AG04450 (cell line): ENCODE measurements at regions of chr11 and their contacts with region 1.

Region 1: GRCh38 chr11:10857709-10858438 is at the start of gene ZBED5:
- DNase-seq: peak; percentile 91
- H3K4me3 ChIP-seq: peak within 1 kb of the TSS; percentile 92
- H3K27ac ChIP-seq: peak within 1 kb of the TSS; percentile 97
- H3K27me3 ChIP-seq: no peaks in the 10 kb centered on the region
- CTCF ChIP-seq: peak; percentile 25; the same call in 1 of the 2 replicates
- polyA plus RNA-seq, gene ZBED5: 77.5 and 87.7 TPM in 2 replicates

Region 2: GRCh38 chr11:9527481-9528140 is 1330.3 kb before region 1 on chr11:
- CTCF ChIA-PET with region 1: no interaction called
- POLR2A ChIA-PET with region 1: no interaction called
- DNase-seq: peak; percentile 13
- H3K4me3 ChIP-seq: no peak overlapping the region
- H3K27ac ChIP-seq: peak overlapping the region; percentile 66
- H3K27me3 ChIP-seq: no peaks in the 10 kb centered on the region
- CTCF ChIP-seq: no peak

Region 3: DNA sequence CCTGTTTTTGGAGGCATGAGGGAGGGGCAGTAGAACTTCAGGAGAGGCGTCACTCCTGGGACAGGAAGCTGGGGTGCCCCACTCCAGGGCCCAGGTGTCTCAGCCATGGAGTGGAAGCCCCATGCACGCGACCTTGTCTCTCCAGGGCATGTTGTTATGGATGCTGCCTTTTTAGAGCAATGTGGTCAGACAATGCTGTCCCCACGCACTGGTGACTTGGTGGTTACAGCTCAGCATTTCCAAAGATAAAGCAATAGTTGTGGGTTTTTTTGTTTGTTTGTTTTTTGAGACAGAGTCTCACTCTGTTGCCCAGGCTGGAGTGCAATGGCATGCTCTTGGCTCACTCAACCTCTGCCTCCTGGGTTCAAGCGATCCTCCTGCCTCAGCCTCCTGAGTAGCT is 71.4 kb before region 1 on chr11:
- CTCF ChIA-PET with region 1: no interaction called
- POLR2A ChIA-PET with region 1: no interaction called
- DNase-seq: no peak
- H3K4me3 ChIP-seq: no peak overlapping the region
- H3K27ac ChIP-seq: no peak overlapping the region
- H3K27me3 ChIP-seq: no peaks in the 10 kb centered on the region
- CTCF ChIP-seq: no peak

Region 4: GRCh38 chr11:10818594-10818993 is 39.3 kb before region 1 on chr11:
- CTCF ChIA-PET with region 1: interaction called, 9 read pairs
- POLR2A ChIA-PET with region 1: interaction called, 10 read pairs
- DNase-seq: peak; percentile 70
- H3K4me3 ChIP-seq: no peak overlapping the region
- H3K27ac ChIP-seq: peak overlapping the region; percentile 71
- H3K27me3 ChIP-seq: no peaks in the 10 kb centered on the region
- CTCF ChIP-seq: no peak

Region 5: GRCh38 chr11:10893714-10894151 is 35.9 kb after region 1 on chr11:
- CTCF ChIA-PET with region 1: interaction called, 7 read pairs
- POLR2A ChIA-PET with region 1: interaction called, 44 read pairs
- DNase-seq: peak; percentile 62
- H3K4me3 ChIP-seq: no peak overlapping the region
- H3K27ac ChIP-seq: peak overlapping the region; percentile 72
- H3K27me3 ChIP-seq: no peaks in the 10 kb centered on the region
- CTCF ChIP-seq: peak; percentile 62

Region 6: DNA sequence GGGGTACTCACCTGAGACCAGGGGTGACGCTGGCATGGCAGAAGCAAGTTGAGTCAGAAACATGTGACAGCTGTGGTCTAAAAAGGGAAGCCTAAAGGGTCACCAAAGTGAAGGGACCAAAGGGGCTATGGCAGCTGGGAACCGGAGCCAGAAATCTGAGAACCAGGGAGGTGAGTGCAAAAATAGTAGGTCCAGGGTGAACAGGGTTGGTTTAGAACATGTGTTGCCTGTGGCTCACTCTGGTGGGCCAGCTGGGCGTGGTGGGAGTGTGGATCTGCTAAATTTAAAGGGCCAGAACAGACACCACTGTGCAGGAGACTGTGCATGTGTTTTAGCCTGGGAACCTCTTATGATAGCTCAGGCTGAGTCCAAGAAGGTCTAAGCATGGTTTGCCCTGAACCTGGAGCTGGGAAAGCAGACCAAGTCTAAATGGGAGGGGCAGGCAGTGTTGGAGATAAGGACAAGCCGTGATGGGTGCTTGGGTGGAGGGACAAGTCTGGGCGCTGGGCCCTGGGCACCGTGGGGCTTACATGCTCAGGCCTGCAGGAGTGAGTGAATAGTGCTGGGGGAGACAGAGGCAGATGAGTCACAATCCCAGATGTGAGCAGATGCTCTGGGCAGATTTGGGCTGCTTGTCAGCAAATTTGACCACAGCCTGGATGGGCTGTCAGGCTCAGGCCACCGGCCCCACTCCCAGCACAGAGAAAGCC is 41.4 kb after region 1 on chr11:
- CTCF ChIA-PET with region 1: interaction called, 7 read pairs
- POLR2A ChIA-PET with region 1: interaction called, 44 read pairs
- DNase-seq: no peak
- H3K4me3 ChIP-seq: peak overlapping the region; percentile 45
- H3K27ac ChIP-seq: peak overlapping the region; percentile 100
- H3K27me3 ChIP-seq: no peaks in the 10 kb centered on the region
- CTCF ChIP-seq: no peak

Region 7: GRCh38 chr11:10943968-10944367 is 86.1 kb after region 1 on chr11:
- CTCF ChIA-PET with region 1: no interaction called
- POLR2A ChIA-PET with region 1: no interaction called
- DNase-seq: peak; percentile 34
- H3K4me3 ChIP-seq: no peak overlapping the region
- H3K27ac ChIP-seq: peak overlapping the region; percentile 25
- H3K27me3 ChIP-seq: peaks cover 12% of the 10 kb centered on the region
- CTCF ChIP-seq: no peak

Region 8: GRCh38 chr11:11202885-11203284 is 345.0 kb after region 1 on chr11:
- CTCF ChIA-PET with region 1: no interaction called
- POLR2A ChIA-PET with region 1: no interaction called
- DNase-seq: no peak
- H3K4me3 ChIP-seq: no peak overlapping the region
- H3K27ac ChIP-seq: no peak overlapping the region
- H3K27me3 ChIP-seq: peaks cover 16% of the 10 kb centered on the region
- CTCF ChIP-seq: no peak